GM12878 (cell line): ENCODE measurements at regions of chr20 and their contacts with region 1.

Region 1: DNA sequence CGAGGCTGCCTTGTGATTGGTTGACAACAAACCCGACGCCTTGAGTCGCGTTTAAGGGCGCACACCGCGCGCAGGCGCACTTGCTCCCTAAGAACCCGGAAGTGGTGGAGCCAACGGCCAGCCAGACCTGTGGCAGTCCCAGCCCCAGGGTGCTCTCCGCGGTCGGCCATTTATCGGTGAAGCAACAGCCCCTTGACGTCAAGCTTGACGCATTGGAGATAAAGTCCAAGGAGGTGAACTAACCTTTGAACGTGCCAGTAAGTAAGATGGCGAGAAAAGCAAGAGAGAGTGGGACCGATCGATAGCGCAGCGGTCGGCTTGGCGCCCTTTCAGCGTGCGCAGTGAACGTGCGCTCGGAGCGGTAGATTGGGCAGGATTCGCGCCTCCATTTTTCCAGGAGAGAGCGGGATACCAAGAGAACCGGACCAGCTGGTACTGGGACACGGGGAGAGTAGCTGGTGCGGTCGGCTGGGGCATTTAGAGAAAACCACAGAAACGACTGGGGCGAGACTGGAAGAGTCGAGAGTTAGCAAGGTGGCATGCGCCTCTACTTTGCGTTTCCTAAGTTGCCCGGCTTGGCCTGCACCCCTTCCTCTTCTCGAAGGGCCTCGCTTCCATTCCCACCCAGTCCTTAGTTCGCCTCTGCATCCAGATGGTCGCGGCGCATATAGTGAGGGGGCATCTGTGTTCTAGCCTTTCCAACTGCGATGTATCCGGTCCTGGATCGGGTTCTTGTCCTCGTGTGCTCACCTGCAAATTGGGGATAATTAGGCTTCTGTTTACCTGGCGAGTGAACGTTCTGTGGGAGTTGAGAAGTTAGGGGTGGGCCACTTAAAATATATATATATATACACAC is at the start of gene CSTF1:
- DNase-seq: peak; percentile 97
- ATAC-seq: peak; percentile 92
- H3K4me3 ChIP-seq: peak within 1 kb of the TSS; percentile 99
- H3K27ac ChIP-seq: peak within 1 kb of the TSS; percentile 78
- H3K4me1 ChIP-seq: peaks cover 3% of the 10 kb centered on the region; the same call in 1 of the 2 replicates
- H3K27me3 ChIP-seq: no peaks in the 10 kb centered on the region
- CTCF ChIP-seq: no peak
- EP300 ChIP-seq: peak in 1 of 2 experiments; percentile 37; a peak in 1 of 4 replicates
- POLR2A ChIP-seq: peak; percentile 82
- RAD21 ChIP-seq: no peak
- polyA plus RNA-seq, gene CSTF1: 63.3 to 66.0 TPM

Region 2: DNA sequence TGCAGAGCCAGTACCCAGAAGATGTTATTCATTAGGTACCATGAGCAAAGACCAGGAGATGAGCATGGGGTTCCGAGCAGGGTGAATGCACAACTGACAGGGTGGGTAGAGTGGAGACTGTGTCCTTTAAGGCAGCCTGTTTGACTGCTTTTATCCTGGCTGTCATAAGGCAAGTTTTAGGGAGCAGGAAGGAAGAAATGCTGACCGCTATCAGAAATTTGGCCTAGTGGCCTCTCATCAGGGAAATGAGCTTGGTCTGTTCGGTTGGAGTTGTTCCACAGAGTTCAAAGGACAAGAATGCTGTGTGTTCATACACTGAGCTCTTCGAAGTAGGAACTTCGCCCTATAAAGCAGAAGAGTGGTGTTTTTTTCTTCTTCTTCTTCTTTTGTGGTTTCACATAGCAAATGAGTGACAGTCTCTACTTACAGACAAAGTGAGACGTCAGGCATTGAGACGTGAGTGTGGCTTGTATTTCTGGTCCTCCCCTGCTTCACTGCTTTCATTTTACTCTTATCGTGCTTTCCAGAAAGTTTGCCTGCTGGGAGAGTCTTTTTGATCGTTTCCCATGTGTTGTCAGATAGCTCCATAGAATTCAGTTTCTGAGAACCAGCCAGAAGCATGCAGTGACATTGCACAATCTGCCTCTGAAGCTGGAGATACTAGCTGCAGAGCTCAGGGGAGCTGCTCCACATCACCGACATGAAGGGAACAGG is 19.4 kb after region 1 on chr20 and contains the start of gene CASS4:
- CTCF ChIA-PET with region 1: interaction called, 13 read pairs
- POLR2A ChIA-PET with region 1: interaction called, 3 read pairs
- RAD21 ChIA-PET with region 1: interaction called, 8 read pairs
- SMC1A ChIA-PET with region 1: interaction called, 3 read pairs
- in situ Hi-C with region 1: no loop called
- intact Hi-C with region 1: no loop called
- DNase-seq: no peak
- ATAC-seq: peak; percentile 75
- H3K4me3 ChIP-seq: no peak within 1 kb of the TSS; the same call in 1 of the 2 replicates
- H3K27ac ChIP-seq: peak within 1 kb of the TSS; percentile 32; the same call in 1 of the 2 replicates
- H3K4me1 ChIP-seq: peaks cover 6% of the 10 kb centered on the region; the same call in 1 of the 2 replicates
- H3K27me3 ChIP-seq: no peaks in the 10 kb centered on the region
- CTCF ChIP-seq: no peak
- EP300 ChIP-seq: no peak
- POLR2A ChIP-seq: no peak
- RAD21 ChIP-seq: no peak
- polyA plus RNA-seq, gene CASS4: 0.04 to 0.11 TPM

Region 3: DNA sequence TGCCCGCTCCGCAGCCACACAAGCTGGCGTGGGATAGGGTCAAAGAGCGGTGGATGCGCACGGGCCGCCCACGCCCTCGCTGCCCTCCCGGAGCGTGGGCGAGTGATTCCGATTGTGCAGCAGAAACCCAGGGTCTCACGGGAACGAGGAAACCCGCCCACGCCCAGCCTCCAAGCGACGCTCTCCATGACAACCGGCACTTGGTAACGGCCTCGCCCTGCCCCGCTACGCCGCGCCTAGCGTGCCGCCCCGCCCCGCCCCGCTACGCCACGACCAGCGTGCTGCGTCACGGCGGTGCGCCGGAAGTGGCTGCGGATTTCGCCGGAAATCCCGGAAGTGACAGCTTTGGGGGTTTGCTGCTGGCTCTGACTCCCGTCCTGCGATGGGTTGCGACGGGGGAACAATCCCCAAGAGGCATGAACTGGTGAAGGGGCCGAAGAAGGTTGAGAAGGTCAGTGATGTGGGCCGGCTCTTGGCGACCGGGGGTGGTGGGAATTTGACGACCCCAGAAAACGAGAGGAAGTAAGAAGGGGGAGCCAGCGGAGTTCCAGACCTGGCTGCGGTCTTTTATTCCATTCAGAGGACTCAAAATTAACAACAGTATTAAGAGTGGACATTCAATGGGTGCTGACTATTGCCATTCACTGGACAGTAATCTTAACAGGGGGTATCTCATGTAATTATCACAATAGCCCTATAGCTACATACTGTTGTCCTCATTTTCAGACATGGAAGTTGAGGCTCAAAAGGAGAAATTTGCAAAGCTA is 76.0 kb after region 1 on chr20 and contains the start of gene RTF2:
- CTCF ChIA-PET with region 1: interaction called, 13 read pairs
- POLR2A ChIA-PET with region 1: no interaction called
- RAD21 ChIA-PET with region 1: interaction called, 9 read pairs
- SMC1A ChIA-PET with region 1: interaction called, 14 read pairs
- in situ Hi-C with region 1: no loop called
- intact Hi-C with region 1: loop called (anchors 2 kb)
- DNase-seq: peak; percentile 86
- ATAC-seq: peak; percentile 98
- H3K4me3 ChIP-seq: peak within 1 kb of the TSS; percentile 90
- H3K27ac ChIP-seq: peak within 1 kb of the TSS; percentile 85
- H3K4me1 ChIP-seq: peaks cover 14% of the 10 kb centered on the region
- H3K27me3 ChIP-seq: no peaks in the 10 kb centered on the region
- CTCF ChIP-seq: no peak
- EP300 ChIP-seq: peak; percentile 12 to 65; a peak in 1 of 4 replicates
- POLR2A ChIP-seq: peak; percentile 93
- RAD21 ChIP-seq: no peak
- polyA plus RNA-seq, gene RTF2: 99.3 to 133 TPM

Region 4: GRCh38 chr20:56504373-56505005 is 112.0 kb after region 1 on chr20:
- CTCF ChIA-PET with region 1: interaction called, 12 read pairs
- POLR2A ChIA-PET with region 1: no interaction called
- RAD21 ChIA-PET with region 1: no interaction called
- SMC1A ChIA-PET with region 1: interaction called, 5 read pairs
- in situ Hi-C with region 1: no loop called
- intact Hi-C with region 1: no loop called
- DNase-seq: no peak
- ATAC-seq: peak; percentile 66
- H3K4me3 ChIP-seq: no peak overlapping the region
- H3K27ac ChIP-seq: no peak overlapping the region
- H3K4me1 ChIP-seq: no peaks in the 10 kb centered on the region
- H3K27me3 ChIP-seq: no peaks in the 10 kb centered on the region
- CTCF ChIP-seq: peak; percentile 25 to 53 (median 52); a peak in 4 of 6 replicates
- EP300 ChIP-seq: no peak
- POLR2A ChIP-seq: no peak
- RAD21 ChIP-seq: 0 out of 2 replicates have a peak, but pooled peaks have one; percentile 18

Region 5: DNA sequence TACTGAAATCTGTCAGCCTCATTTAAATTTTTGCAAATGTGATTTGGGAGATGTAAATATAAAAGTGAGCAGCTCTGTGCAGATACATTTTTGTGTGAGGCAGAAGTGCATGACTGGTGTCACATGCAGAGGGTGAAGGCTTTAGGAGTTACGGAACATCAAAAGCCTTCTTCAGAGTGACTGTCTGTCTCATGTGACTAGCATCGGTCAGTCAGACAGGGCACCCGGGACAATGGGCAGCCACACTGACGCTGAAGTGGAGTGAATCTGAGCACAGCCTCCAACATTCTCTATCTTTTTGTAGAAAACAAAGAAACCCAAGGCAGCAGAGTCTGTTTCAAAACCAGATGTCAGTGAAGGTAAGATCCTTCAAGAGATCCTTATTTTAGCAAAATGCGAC is 124.1 kb after region 1 on chr20:
- CTCF ChIA-PET with region 1: interaction called, 12 read pairs
- POLR2A ChIA-PET with region 1: no interaction called
- RAD21 ChIA-PET with region 1: no interaction called
- SMC1A ChIA-PET with region 1: interaction called, 4 read pairs
- in situ Hi-C with region 1: no loop called
- intact Hi-C with region 1: no loop called
- DNase-seq: no peak
- ATAC-seq: no peak
- H3K4me3 ChIP-seq: no peak overlapping the region
- H3K27ac ChIP-seq: no peak overlapping the region
- H3K4me1 ChIP-seq: no peaks in the 10 kb centered on the region
- H3K27me3 ChIP-seq: no peaks in the 10 kb centered on the region
- CTCF ChIP-seq: no peak
- EP300 ChIP-seq: no peak
- POLR2A ChIP-seq: no peak
- RAD21 ChIP-seq: no peak